Right ventricle myocardium inferior (tissue), 1 donor: ENCODE measurements at regions of chrX and their contacts with region 1.

Region 1: DNA sequence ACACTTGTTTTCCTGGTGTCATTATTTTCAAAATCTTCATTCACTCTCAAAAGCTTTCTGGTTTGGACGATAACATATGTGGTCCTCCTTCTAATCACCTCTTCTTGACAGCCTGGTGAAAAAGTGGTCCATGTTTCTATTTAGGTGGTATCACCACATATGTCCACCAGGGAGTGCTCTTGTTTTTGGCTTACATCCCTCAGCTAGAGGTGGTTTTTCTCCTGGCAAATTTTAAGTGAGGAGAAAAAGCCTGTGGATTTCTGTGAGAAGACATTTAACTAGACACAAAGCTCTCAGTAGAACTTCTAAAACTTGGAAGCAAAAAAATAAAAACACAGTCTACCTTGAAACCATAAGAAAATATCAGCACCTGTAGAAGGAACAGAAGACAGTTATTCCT is 58.0 kb upstream of the FRMPD4 start:
- DNase-seq: no peak
- ATAC-seq: no peak

Region 2: DNA sequence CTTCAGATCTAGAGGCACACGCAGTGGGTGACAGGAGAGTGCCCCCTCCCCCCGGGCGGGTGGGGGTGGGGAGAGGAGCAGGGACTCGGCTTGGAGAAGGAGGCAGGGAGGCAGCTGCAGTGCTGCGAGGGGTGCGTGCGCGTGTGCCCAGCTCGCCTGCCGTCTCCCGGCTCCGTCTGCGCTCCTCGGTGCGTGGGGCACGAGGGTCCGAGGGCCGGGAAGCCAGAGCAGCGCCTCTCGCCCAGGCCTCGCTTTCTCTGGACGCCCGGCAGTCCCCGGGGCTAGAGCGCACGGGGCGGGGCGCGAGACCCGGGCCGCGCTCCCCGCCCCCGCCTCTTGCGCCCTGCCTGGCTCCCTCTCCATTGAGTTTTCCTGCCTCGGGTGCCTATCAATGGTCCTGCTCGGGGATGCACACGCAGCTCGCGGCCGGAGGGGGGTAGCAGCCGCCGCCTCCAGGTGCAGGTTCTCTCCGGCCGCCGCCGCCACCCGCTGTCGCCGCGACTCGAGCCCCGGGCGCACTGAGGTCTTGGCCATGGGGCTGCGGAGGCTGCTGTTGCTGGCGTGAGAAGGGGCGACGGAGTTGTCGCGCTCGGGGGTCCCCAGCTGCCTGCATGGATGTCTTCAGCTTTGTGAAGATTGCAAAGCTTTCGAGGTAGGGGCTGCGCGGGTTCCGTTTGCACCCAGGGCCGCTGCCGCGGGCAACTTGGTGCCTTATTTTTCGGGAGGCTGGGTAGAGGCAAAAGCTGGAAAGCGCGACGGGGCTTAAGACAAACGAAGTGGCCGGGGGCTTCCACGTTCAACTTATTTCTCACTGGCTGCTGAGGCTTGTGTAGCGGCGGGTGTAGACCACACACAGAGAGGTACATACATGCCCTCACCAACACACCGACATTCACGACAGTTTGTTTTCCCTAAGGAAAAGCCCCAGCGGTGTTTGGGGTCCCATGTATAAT is 58.4 kb after region 1 on chrX and contains the start of gene FRMPD4:
- intact Hi-C with region 1: no loop called
- DNase-seq: peak; percentile 51
- ATAC-seq: no peak
- total RNA-seq, gene FRMPD4: 1.2 TPM

Region 3: DNA sequence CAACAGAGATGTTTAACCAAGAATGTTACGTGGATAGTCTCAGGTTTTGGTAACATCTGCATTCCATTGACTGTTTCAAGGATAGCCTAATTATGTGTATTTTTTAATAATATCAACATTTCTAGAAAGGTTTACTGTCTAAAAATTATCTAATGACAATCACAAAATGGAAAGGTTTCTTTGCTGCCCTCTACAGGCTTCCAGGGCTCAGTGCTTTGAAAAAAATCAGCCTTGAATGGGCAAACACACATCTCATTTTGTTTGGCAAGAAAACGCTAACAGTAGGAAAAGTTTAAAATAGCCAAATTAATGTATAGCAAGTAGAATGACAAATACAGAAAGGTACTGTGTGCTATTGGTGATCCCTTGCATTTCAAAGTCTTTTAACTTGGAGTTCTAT is 487.6 kb after region 1 on chrX:
- intact Hi-C with region 1: loop called (anchors 10 kb)
- DNase-seq: no peak
- ATAC-seq: no peak

Region 4: DNA sequence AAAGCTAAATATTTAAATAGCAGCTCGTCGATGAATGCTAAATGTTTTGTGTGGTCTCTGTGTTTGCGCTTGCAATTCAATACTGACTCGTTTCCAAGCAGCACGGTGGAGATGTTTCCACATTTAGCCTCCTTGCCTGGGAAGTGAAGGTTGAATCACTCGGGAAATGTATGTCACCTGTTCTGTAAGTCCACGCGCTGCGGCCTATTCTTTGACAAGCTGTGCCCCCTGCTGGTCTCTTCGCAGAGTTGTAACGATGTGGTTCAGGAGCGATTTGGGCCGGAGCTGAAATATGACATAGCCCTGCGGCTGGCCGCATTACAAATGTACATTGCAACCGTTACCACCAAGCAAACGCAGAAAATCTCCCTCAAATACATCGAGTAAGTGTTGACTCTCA is 621.4 kb after region 1 on chrX:
- intact Hi-C with region 1: loop called (anchors 5 kb)
- DNase-seq: no peak
- ATAC-seq: no peak